ENCODE measurements at regions of chr19 and their contacts with region 1.

Region 1: DNA sequence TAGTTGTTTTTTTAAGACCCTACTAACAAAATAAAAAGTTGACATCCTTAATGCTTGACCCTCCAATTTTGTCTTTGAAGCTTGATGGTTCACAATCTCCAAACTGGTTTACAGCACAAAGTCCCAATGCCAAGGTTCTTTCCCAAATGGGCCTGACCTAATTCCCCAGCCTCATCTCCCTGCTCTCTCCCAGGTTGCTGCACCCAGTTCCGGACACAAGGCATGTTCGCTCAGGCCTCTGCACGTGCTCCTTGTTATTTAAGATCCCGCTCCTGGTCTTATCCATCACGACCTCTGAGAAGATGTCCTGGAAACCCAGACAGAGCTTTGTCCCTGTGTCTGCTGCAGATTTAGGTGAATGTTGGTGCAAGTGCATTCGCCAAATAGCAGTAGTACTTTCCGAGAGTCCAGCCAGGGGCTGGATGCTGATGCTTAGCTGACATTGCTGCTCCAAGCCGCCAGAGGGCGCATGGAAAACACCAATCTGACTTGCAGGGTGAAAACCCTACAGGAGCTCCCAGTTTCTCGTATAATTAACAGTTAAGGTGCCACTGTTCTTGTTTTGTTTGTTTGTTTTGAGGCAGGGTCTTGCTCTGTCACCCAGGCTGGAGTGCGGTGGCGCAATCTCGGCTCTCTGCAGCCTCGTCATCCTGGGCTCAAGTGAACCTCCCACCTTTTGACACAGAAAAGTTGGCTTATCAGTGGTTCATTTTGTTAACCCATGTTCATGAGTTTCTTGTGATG is 18.5 kb downstream of the LYPD3 start:
- DNase-seq: peak; percentile 67 to 71
- H3K4me3 ChIP-seq: no peak overlapping the region
- H3K27ac ChIP-seq: no peak overlapping the region
- H3K4me1 ChIP-seq: peaks cover 6% of the 10 kb centered on the region; the same call in 1 of the 2 replicates
- H3K27me3 ChIP-seq: no peaks in the 10 kb centered on the region
- CTCF ChIP-seq: peak; percentile 94

Region 2: DNA sequence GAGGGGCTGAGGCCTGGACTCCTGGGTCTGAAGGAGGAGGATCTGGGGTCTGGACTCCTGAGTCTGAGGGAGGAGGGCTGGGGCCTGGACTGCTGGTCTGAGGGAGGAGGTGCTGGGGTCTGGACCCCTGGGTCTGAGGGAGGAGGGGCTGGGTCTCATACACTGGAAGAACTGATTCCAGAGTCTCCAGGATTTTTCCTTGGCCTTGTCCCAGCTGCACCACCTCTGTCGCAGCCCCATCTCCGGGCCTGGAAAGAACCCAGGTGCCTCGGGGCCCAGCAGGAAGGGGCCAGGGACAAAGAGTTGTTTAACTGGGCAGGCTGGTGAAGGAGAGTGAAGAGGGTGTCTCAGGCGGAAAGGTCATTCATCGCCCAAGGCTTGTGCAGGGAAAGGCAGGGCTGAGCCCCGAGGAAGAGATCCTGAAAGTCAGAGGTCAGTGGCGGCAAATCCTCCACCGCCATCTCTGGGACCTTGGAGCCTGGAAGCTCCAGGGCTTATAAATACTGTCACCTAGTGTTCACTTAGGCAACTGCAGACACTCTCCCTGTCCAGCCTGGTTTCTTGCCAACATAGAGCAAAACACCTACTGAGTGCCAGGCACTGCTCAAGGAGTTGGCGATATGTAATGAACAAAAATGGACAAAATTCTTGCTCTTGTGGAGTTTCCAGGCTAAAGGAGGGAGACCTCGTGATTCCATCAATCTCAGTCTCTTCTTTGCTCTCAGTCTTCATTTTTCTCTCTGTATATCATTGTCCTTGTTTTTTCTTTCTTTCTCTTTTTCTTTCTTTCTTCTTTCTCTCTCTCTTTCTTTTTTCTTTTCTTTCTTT is 338.3 kb after region 1 on chr19:
- CTCF ChIA-PET with region 1: no interaction called
- POLR2A ChIA-PET with region 1: no interaction called
- intact Hi-C with region 1: loop called (anchors 10 kb)
- DNase-seq: peak; percentile 86 to 91
- H3K4me3 ChIP-seq: peak overlapping the region; percentile 16; the same call in 1 of the 2 replicates
- H3K27ac ChIP-seq: peak overlapping the region; percentile 70
- H3K4me1 ChIP-seq: peaks cover 43% of the 10 kb centered on the region
- H3K27me3 ChIP-seq: no peaks in the 10 kb centered on the region
- CTCF ChIP-seq: peak; percentile 97